Posterior cingulate gyrus (tissue), 11 donors: ENCODE measurements at regions of chr17 and their contacts with region 1.

Region 1: DNA sequence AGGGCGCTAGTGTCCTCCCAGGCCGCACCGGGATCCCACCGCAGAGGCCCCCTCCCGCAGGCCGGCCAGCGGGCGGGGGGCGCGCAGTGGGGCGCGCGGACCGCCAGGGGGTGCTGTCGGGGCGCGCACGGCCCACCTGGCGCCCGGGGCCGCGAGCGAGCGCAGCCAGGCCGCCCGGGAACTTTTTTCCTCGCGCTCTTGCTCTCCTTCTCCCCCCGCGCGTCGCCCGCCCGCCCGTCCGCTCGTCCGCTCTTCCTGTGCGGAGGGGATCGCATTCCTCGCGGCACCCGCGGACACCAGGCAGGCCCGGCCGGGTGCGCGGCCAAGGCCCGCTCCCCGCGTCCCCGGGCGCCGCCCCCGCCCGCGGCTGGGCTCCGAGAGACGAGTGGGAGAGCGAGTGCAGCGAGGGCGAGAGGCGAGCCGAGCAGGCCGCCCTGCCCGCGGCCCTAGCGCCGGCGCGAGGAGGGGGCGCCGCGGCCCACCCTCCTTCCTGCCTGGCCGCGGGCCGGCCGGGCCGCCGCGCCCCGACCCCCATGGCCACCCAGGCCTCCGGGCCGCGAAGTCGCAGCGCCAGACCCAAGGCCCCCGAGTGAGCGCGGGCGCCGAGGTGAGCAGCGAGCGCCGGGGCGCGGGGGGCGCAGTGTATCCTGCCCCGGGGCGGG is at the start of gene RAI1:
- DNase-seq: peak in 9 of 10 donors; percentile 53 to 95 (median 66)

Region 2: DNA sequence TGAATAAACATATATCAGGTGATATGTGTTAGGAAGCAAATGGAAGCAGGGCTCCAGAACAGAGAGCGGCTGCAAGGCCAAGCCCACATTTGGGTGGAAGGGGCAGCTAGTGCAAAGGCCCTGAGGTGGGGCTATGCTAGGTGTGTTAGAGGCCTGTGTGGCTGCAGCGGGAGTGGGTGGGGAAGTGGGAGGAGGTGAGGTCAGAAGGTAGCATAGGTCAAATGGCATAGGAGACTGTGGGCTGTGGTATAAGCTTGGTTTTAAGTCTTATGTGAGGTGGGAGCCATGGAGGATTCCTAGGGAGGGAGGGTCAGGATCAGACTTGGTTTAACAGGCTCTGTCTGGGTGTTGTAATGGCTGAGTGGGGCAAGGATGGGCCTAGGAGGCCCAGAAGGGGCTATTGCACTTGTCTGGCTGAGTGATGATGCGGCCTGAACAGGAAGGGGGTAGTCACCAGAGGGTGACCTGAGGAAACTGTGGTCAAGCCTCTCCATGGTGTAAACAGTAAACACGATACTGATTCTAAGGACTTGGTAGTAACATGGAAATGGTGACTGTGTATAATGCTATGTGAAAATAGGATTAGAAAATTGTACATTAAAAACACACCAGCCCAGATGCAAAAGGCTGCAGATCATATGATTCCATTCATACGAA is 31.1 kb after region 1 on chr17:
- intact Hi-C with region 1: no loop called
- DNase-seq: no peak

Region 3: GRCh38 chr17:17729620-17730249 is 48.4 kb after region 1 on chr17:
- intact Hi-C with region 1: loop called (anchors 5 kb)
- DNase-seq: peak in 2 of 10 donors; percentile 30 to 42

Region 4: DNA sequence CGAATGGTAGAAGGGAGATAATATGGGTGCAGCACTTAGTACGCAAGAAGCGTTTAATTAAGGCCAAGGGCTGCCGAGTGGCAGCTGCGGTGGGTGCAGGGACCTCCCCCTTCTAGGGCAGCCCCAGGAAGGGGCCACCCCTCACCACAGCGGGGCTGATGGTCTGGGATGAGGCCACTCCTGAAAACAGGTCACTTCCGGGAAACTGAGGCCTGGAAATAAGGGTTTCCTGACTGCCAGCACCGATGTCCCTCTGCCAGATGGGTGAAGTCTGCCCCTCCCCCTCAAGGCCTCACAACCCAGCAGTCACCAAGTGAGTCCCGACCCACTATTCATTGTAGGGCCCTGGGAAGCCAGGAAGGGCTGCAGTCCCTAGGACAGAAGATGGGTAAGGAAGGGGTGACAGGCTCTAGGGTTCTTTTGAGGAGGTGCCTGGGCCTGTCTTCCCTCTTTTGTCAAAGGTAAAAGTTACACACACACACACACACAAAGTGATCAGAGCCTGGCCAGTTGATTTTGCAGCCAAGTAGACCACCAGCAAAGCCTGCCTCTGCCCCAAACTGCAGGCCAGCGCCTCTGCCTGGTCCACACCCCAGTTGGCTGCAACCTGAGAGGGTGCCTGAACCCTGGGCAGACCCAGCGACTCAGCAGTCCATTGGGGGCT is 142.9 kb after region 1 on chr17:
- intact Hi-C with region 1: no loop called
- DNase-seq: no peak

Region 5: DNA sequence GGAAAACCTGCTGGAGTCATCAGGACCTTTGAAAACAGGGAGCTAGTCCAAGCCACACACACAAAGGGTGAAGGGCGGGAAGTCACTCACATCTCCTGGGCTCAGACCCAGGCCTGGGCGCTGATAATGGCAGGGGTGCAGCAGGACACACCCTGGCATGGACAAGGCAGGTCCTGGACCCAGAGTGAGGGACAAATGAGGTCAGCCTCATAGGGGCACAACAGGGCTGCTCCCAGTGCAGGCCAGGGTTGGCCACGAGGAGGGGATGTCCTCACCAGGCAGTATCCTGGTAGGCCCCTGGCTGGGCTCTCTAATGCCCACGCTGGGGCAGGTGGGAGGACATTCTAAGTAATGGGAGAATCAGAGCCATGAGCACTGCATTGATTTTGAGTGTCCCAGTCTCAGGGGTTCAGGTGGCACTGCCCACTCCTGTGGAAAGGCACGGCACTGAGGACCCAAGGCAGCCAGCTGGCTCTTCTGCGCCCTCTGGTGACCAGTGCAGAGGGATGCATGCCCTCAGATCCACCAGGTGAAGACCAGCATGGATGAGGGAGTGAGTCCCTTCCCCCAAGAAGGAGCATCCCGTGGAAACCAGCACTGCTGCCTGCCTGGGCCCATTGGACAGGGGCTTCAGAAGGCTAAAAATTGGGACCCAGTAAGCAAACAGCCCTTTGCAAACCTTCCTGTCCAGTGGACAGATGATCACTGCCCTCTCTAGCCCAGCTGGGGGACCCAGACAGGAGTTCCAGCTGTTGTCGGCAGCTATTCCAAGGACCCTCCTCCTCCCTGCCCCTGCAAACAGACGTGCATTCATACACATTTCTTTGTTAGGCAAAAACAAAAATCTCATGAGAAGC is 178.8 kb after region 1 on chr17:
- intact Hi-C with region 1: loop called (anchors 1 kb)
- DNase-seq: peak; percentile 66 to 97 (median 78)

Region 6: DNA sequence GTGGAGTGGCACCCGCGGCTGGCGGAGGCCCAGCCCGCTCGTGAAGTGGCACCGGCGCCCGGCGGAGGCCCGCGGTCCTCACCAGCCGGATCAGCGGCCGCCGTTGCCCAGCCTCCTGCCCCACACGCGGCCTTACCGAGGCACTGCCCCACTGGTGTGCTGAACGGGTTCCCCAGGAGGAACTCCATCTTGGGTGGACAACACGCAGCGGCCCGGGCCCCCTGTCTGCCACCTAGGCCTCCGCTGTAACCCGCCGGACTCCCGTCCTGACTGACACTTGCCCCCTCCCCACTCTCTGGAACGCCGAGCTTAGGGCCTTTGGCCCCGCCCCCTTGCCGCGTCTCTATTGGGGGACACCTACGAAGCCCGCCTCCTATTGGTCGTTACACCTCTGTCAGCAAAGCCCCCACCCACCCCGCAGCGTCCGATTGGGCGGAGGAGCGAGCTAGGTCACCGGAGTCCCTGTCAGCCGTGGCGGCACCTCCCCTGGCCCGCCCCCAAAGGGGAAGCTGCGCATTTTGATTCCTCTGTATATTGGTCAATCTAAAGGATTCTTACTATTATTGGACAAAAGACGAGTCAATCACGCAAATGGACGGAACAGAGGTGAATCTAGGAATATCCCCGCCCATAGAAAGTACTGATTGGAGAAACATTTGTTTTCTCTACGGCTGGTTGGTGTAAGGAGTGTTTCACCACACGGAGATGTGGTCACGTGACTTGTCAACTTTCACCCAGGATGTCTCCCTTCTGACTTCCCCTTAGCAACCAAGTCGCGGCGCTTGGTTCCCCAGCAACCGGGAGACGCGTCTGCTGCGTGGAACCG is 291.0 kb after region 1 on chr17 and contains the starts of genes DRC3 and TOM1L2:
- intact Hi-C with region 1: loop called (anchors 5 kb)
- DNase-seq: peak; percentile 100

Region 7: GRCh38 chr17:18033442-18034099 is 352.3 kb after region 1 on chr17:
- intact Hi-C with region 1: loop called (anchors 2 kb)
- DNase-seq: peak in 3 of 10 donors; percentile 19 to 67 (median 30)